Activated T-helper 2 cell treated with anti-CD3 and anti-CD28 coated beads, Interferon-gamma antibody, Interleukin-2, Interleukin-4, amounts not matched to agents 10 μg/mL and 5 μg/mL and 100 μg/mL, durations not matched to agents 14 hours and 24 hours and 36 hours (primary cell): ENCODE measurements at regions of chr9 and their contacts with region 1.

Region 1: GRCh38 chr9:90964101-90965020 is 162.7 kb downstream of the SYK start:
- DNase-seq: peak; percentile 17
- H3K4me3 Mint-ChIP-seq: peak overlapping the region; percentile 69
- H3K27ac Mint-ChIP-seq: peak overlapping the region; percentile 81
- H3K4me1 Mint-ChIP-seq: peaks cover 65% of the 10 kb centered on the region
- H3K27me3 Mint-ChIP-seq: no peaks in the 10 kb centered on the region

Region 2: DNA sequence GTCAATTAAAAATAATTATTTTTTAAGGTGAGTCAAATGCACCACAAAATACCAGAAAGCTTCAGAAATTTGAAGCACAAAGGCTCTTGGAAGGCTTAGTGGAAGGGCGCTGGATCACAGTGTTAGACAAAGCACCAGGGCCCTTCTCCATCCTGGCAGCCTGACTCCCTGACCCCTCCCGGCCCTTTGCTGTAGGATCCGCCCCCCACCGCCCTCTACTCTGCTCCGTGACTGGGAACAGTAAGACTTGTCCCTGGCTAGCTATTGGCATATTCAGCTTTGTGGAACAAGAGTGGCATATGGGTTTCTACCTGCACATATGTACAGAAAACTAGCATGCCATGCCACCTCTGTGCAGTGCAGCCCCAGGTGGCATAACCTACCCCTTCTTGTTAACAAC is 59.4 kb after region 1 on chr9:
- intact Hi-C with region 1: loop called (anchors 5 kb)
- DNase-seq: no peak
- H3K4me3 Mint-ChIP-seq: no peak overlapping the region
- H3K27ac Mint-ChIP-seq: no peak overlapping the region
- H3K4me1 Mint-ChIP-seq: peaks cover 36% of the 10 kb centered on the region
- H3K27me3 Mint-ChIP-seq: no peaks in the 10 kb centered on the region

Region 3: DNA sequence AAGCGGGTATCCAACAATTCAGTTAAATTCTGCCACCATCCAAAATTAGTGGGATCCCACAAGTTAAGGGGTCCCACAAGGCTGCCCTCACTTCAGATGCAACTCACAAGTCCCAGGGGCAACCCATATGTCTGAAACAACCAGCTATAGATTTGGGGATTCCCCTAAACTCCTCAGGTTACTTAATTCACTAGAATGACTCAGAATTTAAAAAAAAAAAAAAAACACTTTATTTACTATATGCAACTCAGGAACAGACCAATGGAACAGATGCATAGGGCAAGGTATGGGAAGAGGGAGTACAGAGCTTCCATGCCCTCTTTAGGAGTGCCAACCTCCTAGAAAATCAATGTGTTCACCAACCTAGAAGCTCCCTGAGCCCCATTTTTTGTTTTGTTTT is 382.3 kb after region 1 on chr9:
- intact Hi-C with region 1: loop called (anchors 5 kb)
- DNase-seq: no peak
- H3K4me3 Mint-ChIP-seq: no peak overlapping the region
- H3K27ac Mint-ChIP-seq: peak overlapping the region; percentile 44
- H3K4me1 Mint-ChIP-seq: peaks cover 61% of the 10 kb centered on the region
- H3K27me3 Mint-ChIP-seq: no peaks in the 10 kb centered on the region